Mammary epithelial cell (primary cell): ENCODE measurements at regions of chr12 and their contacts with region 1.

Region 1: GRCh38 chr12:15910864-15911721 is at the start of gene DERA:
- DNase-seq: peak; percentile 78
- H3K4me3 ChIP-seq: peak within 1 kb of the TSS; percentile 88 to 99 (median 90)
- H3K27ac ChIP-seq: peak within 1 kb of the TSS; percentile 92
- H3K4me1 ChIP-seq: peaks cover 6% of the 10 kb centered on the region
- H3K27me3 ChIP-seq: no peaks in the 10 kb centered on the region
- CTCF ChIP-seq: no peak
- total RNA-seq, gene DERA: 43.2 to 49.2 TPM

Region 2: DNA sequence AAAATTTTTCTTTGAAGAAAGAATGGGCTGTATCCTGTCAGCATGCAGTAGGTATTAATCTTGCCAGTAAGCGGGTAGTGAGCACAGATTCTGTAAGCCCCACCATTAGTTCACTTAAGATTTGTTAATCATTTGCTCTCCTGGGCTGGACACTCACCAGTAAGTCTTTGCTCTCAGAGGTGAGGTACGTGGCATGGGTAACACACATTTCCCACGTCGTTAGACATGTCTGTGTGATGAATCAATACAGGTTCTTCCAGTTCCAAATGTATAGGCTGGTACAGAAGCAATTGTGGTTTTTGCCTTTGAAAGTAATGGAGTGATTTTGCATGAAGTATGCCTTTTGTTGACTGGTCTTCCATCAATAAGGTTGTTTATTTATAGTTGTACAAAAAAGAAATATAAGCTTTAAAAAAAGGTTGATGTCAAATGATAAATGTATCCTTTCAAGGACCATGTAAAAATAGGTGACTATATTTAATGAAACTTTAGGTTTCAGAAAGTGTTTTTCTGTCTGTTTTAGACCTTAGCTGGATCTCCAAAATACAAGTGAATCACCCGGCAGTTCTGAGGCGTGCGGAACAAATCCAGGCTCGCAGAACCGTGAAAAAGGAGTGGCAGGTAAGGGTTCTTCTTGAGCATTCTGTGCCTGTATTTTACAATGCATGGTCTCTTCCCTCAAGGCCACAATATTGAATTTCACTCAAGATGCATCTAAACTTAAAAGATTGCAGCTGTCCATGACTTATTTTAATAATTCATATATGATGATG is 45.5 kb after region 1 on chr12:
- CTCF ChIA-PET with region 1: no interaction called
- dilution Hi-C with region 1: no loop called
- in situ Hi-C with region 1: no loop called
- intact Hi-C with region 1: loop called (anchors 2 kb)
- DNase-seq: peak; percentile 98
- H3K4me3 ChIP-seq: peak overlapping the region in 2 of 3 experiments; percentile 24 to 34
- H3K27ac ChIP-seq: peak overlapping the region; percentile 95
- H3K4me1 ChIP-seq: peaks cover 23% of the 10 kb centered on the region
- H3K27me3 ChIP-seq: no peaks in the 10 kb centered on the region
- CTCF ChIP-seq: no peak

Region 3: DNA sequence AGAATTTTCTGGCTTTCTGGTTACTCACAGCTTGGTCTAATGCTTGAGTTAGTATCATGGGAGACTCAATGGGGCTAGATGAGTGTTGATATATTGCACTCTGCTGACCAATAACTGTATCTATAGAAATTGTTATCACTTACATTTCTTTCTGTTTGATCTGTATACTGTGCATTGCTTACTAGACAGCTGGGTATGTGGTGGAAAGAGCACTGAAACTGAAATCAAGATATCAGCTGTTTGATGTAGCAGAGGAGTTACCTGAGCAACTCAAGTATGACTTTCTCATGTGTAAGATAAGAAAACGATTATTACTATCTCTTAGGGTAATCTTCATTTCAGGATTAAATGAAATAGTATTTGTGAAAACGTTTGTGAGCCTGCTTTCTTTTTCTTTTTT is 183.3 kb after region 1 on chr12:
- CTCF ChIA-PET with region 1: no interaction called
- dilution Hi-C with region 1: no loop called
- in situ Hi-C with region 1: no loop called
- intact Hi-C with region 1: no loop called
- DNase-seq: no peak
- H3K4me3 ChIP-seq: no peak overlapping the region
- H3K27ac ChIP-seq: no peak overlapping the region
- H3K4me1 ChIP-seq: no peaks in the 10 kb centered on the region
- H3K27me3 ChIP-seq: no peaks in the 10 kb centered on the region
- CTCF ChIP-seq: no peak